K562 (cell line): ENCODE measurements at regions of chr9 and their contacts with region 1.

Region 1: DNA sequence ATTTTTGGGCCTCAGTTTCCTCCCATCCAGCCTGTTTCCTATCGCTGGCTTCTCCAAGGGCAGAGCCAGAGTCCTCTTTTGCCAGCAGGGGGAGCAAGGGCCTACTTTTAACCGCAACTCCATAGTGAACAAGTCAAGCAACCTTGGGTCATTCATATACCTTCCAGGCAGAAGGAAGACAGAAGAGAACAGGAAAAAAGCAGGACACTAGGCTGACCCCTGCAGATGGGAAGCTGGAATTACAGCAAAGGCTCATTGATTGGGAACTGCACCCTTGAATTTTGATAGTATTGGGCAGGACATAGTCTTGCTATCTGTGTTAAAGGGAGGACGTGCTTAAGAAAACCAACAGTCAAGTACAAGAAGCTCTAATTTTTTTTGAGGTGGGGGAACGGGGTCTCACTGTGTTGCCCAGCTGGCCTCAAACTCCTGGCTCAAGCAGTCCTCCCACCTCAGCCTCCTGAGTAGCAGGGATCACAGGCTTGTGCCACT is 30.1 kb downstream of the QRFP start:
- DNase-seq: peak in 2 of 4 experiments; percentile 97 to 100
- ATAC-seq: peak; percentile 94
- H3K4me3 ChIP-seq: no peak overlapping the region
- H3K27ac ChIP-seq: no peak overlapping the region
- H3K4me1 ChIP-seq: peaks cover 0 to 4% of the 10 kb centered on the region in 2 experiments; a peak in 3 of 5 replicates
- H3K27me3 ChIP-seq: no peaks in the 10 kb centered on the region
- CTCF ChIP-seq: no peak
- EP300 ChIP-seq: no peak
- POLR2A ChIP-seq: no peak
- RAD21 ChIP-seq: no peak

Region 2: GRCh38 chr9:130451509-130452388 is 414.8 kb before region 1 on chr9:
- CTCF ChIA-PET with region 1: no interaction called
- POLR2A ChIA-PET with region 1: no interaction called
- in situ Hi-C with region 1: loop called (anchors 10 kb)
- intact Hi-C with region 1: no loop called
- DNase-seq: peak; percentile 67 to 74 (median 72)
- ATAC-seq: peak; percentile 67
- H3K4me3 ChIP-seq: no peak overlapping the region
- H3K27ac ChIP-seq: no peak overlapping the region
- H3K4me1 ChIP-seq: peaks cover 19 to 36% of the 10 kb centered on the region in 2 experiments
- H3K27me3 ChIP-seq: no peaks in the 10 kb centered on the region; a peak in 1 of 5 replicates
- CTCF ChIP-seq: peak; percentile 32 to 65 (median 35)
- EP300 ChIP-seq: no peak
- POLR2A ChIP-seq: no peak
- RAD21 ChIP-seq: peak in 1 of 2 experiments; percentile 39; a peak in 2 of 4 replicates

Region 3: DNA sequence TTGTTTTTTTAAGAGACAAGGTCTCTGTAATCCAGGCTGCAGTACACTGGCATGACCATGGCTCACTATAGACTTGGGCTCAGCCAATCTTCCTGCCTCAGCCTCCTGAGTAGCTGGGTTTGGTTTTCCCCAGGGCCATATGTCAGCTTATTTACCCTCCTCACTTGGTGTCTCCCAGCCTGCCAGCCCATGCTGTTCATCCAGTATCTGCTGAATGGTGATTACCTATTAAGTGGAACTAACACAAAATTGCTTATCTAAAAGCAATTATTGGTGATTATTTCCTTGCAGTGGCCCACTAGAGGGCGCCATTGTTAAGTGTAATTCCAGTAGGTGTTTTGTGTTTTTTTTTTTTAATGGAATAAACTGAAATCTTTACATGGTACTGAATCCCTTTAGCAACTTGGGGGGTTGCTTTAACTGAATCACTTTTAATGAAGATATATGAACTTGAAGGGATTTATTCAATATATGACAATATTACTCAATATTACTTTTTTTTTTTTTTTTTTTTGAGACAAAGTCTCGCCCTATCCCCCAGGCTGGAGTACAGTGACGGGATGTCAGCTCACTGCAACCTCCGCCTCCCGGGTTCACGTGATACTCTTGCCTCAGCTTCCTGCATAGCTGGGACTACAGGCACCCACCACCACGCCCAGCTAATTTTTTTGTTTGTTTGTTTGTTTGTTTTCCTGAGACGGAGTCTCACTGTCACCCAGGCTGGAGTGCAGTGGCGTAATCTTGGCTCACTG is 159.1 kb before region 1 on chr9:
- CTCF ChIA-PET with region 1: interaction called, 82 read pairs
- POLR2A ChIA-PET with region 1: interaction called, 4 read pairs
- in situ Hi-C with region 1: loop called (anchors 5 kb)
- intact Hi-C with region 1: loop called (anchors 1 kb)
- DNase-seq: peak in 1 of 4 experiments; percentile 75
- ATAC-seq: peak; percentile 68
- H3K4me3 ChIP-seq: no peak overlapping the region
- H3K27ac ChIP-seq: no peak overlapping the region
- H3K4me1 ChIP-seq: peaks cover 0 to 5% of the 10 kb centered on the region in 2 experiments; a peak in 1 of 5 replicates
- H3K27me3 ChIP-seq: no peaks in the 10 kb centered on the region
- CTCF ChIP-seq: peak; percentile 54 to 84 (median 75); a peak in 5 of 6 replicates
- EP300 ChIP-seq: no peak
- POLR2A ChIP-seq: peak; percentile 18
- RAD21 ChIP-seq: peak; percentile 60 to 67

Region 4: GRCh38 chr9:130824643-130825350 is 41.7 kb before region 1 on chr9:
- CTCF ChIA-PET with region 1: no interaction called
- POLR2A ChIA-PET with region 1: interaction called, 6 read pairs
- in situ Hi-C with region 1: no loop called
- intact Hi-C with region 1: loop called (anchors 2 kb)
- DNase-seq: peak; percentile 80 to 91 (median 88)
- ATAC-seq: peak; percentile 89
- H3K4me3 ChIP-seq: no peak overlapping the region
- H3K27ac ChIP-seq: peak overlapping the region; percentile 29; the same call in 2 of the 3 replicates
- H3K4me1 ChIP-seq: peaks cover 15 to 20% of the 10 kb centered on the region in 2 experiments
- H3K27me3 ChIP-seq: no peaks in the 10 kb centered on the region
- CTCF ChIP-seq: no peak
- EP300 ChIP-seq: no peak
- POLR2A ChIP-seq: no peak
- RAD21 ChIP-seq: no peak

Region 5: GRCh38 chr9:130854092-130854491 is 12.4 kb before region 1 on chr9:
- CTCF ChIA-PET with region 1: interaction called, 5 read pairs
- POLR2A ChIA-PET with region 1: interaction called, 31 read pairs
- in situ Hi-C with region 1: no loop called
- intact Hi-C with region 1: no loop called
- DNase-seq: peak; percentile 84 to 88 (median 87)
- ATAC-seq: peak; percentile 80
- H3K4me3 ChIP-seq: no peak overlapping the region
- H3K27ac ChIP-seq: no peak overlapping the region
- H3K4me1 ChIP-seq: no peaks in the 10 kb centered on the region; a peak in 1 of 5 replicates
- H3K27me3 ChIP-seq: no peaks in the 10 kb centered on the region
- CTCF ChIP-seq: no peak
- EP300 ChIP-seq: no peak
- POLR2A ChIP-seq: no peak
- RAD21 ChIP-seq: no peak

Region 6: DNA sequence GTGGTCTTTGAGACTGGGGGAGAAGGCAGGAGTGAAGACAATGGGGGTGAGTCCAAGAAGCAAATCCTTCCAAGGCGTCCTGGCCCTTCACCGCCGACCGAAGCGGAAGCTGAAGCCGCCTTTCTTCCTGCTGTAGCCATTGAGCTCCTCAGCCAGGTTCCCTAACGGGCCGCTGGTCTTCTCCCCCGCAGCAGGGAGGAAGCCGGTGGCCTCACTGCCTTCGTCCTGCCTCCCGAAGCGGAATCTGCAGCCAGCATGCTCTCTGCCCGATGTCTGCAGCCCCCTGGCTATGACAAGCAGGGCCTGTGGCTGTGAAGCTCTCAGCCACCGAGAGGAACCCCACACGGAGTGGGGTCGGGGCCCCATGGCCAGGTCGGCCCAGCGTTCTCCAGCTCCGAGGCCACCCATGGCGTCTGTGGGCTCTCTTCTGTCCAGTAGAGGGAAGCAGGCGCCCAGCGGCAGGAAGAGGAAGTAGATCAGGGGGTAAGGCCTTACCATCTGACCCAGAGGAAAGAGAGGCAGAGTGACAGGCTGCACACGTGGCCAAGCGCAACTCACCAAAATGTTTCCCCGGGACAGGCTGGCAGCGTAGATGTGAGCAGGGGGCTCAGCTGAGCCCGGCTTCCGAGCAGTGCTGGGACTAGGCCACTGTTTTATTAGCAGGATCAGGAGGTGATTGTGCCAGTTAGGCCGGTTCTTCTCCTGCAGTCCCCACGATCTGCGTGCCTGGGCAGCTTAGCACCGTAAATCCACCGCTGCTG is 27.0 kb after region 1 on chr9:
- CTCF ChIA-PET with region 1: no interaction called
- POLR2A ChIA-PET with region 1: interaction called, 220 read pairs
- in situ Hi-C with region 1: no loop called
- intact Hi-C with region 1: no loop called
- DNase-seq: peak; percentile 58 to 90 (median 72)
- ATAC-seq: peak; percentile 73
- H3K4me3 ChIP-seq: no peak overlapping the region
- H3K27ac ChIP-seq: no peak overlapping the region
- H3K4me1 ChIP-seq: peaks cover 6 to 56% of the 10 kb centered on the region in 2 experiments; a peak in 4 of 5 replicates
- H3K27me3 ChIP-seq: peaks cover 23 to 33% of the 10 kb centered on the region in 2 experiments; a peak in 4 of 5 replicates
- CTCF ChIP-seq: no peak
- EP300 ChIP-seq: no peak
- POLR2A ChIP-seq: no peak
- RAD21 ChIP-seq: no peak

Region 7: DNA sequence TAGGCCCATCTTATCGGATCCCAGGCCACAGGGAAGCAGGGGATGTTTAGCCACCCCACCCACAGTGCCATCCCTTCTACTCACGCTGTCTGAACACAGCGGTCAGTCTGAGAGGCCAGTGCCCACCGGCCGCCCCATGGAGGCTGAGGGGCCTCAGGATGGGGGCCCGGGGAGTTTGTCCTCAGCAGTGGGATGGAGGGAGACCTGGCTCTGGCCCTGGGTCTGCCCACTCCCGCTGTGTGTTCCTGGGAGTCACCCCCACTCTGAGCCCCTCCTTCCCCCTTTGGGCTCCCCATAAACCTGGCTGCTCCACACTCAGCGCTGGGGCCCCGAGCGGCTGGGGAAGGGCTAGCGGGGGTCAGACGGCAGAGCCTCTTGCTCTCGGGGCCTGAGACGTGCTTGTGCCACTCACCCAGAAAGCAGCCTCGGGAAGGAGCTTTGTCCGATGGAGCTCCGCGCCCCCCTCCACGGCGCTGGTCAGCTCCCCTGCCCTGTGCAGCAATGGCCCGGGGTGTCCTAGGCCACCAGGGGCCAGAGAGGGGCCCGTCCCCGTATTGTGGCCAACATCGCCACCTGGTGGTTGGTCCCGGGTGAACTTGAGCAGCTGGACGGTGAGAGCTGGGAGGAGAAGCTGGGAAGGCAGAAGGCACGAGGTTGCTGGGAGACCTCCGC is 131.5 kb after region 1 on chr9:
- CTCF ChIA-PET with region 1: interaction called, 44 read pairs
- POLR2A ChIA-PET with region 1: interaction called, 16 read pairs
- in situ Hi-C with region 1: loop called (anchors 5 kb)
- intact Hi-C with region 1: loop called (anchors 1 kb)
- DNase-seq: peak; percentile 66 to 100 (median 100)
- ATAC-seq: peak; percentile 94
- H3K4me3 ChIP-seq: no peak overlapping the region
- H3K27ac ChIP-seq: no peak overlapping the region
- H3K4me1 ChIP-seq: peaks cover 0 to 24% of the 10 kb centered on the region in 2 experiments; a peak in 3 of 5 replicates
- H3K27me3 ChIP-seq: peaks cover 71 to 97% of the 10 kb centered on the region in 2 experiments
- CTCF ChIP-seq: no peak
- EP300 ChIP-seq: no peak
- POLR2A ChIP-seq: no peak
- RAD21 ChIP-seq: no peak